Body of pancreas (tissue), 4 donors: ENCODE measurements at regions of chr5 and their contacts with region 1.

Region 1: DNA sequence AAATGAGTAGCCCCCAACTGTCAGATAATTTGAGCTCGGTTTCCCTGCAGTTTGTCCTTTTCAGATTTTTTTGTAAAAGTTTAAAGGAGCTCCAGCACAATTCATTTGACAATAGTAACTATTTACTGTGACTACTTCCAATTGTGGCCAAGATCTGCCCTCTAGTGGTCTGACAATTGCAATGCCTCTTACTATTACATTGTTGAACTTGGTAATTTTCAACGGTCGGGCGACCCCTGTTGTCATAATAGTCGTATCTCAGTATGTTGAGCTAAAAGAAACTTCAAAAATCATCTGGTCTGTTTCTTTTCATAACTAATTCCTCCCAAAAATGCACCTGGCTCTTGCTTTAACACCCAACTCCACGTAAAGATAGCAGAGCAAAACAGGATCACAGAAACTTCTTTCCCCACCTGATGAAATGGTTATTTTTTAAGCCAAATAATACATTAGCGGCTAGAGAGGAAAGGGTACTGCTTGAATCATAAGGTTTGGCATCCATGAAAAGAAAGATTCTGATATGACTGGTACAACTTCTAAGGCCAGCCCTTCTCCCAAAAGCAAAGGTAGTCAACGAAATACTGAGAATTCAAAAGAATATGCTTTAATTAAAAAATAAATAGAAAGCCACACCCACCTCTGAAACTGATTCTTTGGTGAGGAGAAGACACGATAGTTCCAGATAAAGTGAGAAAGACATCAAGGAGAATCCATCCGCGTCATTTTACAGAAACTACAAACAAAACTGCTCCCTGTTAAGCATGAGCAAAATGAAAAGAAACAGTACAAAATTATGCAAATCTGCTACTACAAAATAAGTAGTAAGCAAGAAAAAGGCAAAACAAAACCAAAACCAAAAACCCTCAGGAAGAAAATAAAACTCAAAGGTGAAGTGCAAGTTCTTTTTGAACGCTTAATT is 76.9 kb upstream of the HTR4 start:
- DNase-seq: peak; percentile 80 to 91 (median 84)
- ATAC-seq: peak; percentile 96
- H3K4me3 ChIP-seq: no peak overlapping the region
- H3K27ac ChIP-seq: no peak overlapping the region
- H3K4me1 ChIP-seq: no peaks in the 10 kb centered on the region
- H3K27me3 ChIP-seq: no peaks in the 10 kb centered on the region
- CTCF ChIP-seq: peak; percentile 77 to 99 (median 97)
- POLR2A ChIP-seq: no peak

Region 2: DNA sequence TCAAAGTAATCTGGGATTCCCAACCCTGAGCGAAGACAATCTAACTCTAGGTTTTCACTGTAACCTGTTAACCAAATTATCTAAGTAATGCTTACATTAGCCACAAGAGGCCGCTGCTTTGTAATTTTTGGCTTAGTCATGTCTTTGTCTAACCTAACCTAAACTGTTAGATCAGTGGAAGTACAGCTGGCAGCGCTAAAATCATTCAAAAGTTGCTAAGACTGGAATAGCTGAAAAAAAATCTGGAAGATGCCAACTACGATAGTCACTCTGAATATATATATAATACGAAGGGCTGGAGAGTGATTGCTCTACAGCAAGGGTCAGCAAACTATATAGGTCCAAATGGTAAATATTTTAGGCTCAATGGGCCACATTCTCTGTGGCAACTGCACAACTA is 287.2 kb before region 1 on chr5:
- intact Hi-C with region 1: loop called (anchors 5 kb)
- DNase-seq: peak; percentile 51 to 68 (median 52)
- ATAC-seq: peak; percentile 88
- H3K4me3 ChIP-seq: no peak overlapping the region
- H3K27ac ChIP-seq: no peak overlapping the region
- H3K4me1 ChIP-seq: no peaks in the 10 kb centered on the region
- H3K27me3 ChIP-seq: no peaks in the 10 kb centered on the region
- CTCF ChIP-seq: peak; percentile 20 to 87 (median 74)
- POLR2A ChIP-seq: no peak

Region 3: DNA sequence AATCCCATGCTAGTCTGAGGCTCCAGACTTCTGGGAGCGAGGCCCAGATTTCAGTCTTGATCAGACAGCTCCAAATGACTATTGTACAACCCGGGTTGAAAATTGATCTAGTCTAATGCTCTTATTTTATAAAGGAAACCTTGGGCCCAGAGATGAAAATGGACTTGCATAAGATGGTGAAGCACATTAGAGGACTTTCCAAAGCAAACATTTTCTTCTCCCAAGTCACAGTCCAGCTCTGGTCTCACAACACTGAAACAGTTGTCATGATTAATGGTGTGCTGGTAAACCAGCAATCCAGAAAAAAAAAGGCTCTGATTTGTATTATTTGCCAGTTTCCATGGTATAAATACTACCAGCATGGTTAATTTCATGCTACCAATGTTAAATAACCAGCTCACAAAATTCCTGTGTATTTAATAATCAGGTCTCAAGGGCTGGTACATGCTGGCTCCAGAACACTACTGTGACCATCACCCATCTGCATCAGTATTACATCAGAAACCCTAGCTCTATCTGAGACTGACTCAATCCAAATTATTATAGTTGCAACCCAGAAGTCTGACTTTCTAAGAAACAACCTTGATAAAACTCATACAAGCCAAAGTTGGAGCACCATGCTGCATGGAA is 377.6 kb after region 1 on chr5:
- intact Hi-C with region 1: loop called (anchors 10 kb)
- DNase-seq: no peak
- ATAC-seq: no peak
- H3K4me3 ChIP-seq: no peak overlapping the region
- H3K27ac ChIP-seq: no peak overlapping the region
- H3K4me1 ChIP-seq: no peaks in the 10 kb centered on the region
- H3K27me3 ChIP-seq: no peaks in the 10 kb centered on the region
- CTCF ChIP-seq: no peak
- POLR2A ChIP-seq: no peak